ENCODE measurements at regions of chr2 and their contacts with region 1.

Region 1: GRCh38 chr2:200306196-200306930 is at the start of gene SPATS2L:
- DNase-seq: peak; percentile 89
- H3K4me3 ChIP-seq: peak within 1 kb of the TSS; percentile 92
- H3K27ac ChIP-seq: peak within 1 kb of the TSS; percentile 90
- H3K4me1 ChIP-seq: peaks cover 45% of the 10 kb centered on the region
- H3K27me3 ChIP-seq: no peaks in the 10 kb centered on the region
- total RNA-seq, gene SPATS2L: 103 and 128 TPM in 2 replicates

Region 2: GRCh38 chr2:198756166-198756565 is 1550.2 kb before region 1 on chr2:
- in situ Hi-C with region 1: no loop called
- DNase-seq: peak; percentile 78
- H3K4me3 ChIP-seq: no peak overlapping the region
- H3K27ac ChIP-seq: no peak overlapping the region
- H3K4me1 ChIP-seq: peaks cover 4% of the 10 kb centered on the region; the same call in 1 of the 2 replicates
- H3K27me3 ChIP-seq: no peaks in the 10 kb centered on the region

Region 3: DNA sequence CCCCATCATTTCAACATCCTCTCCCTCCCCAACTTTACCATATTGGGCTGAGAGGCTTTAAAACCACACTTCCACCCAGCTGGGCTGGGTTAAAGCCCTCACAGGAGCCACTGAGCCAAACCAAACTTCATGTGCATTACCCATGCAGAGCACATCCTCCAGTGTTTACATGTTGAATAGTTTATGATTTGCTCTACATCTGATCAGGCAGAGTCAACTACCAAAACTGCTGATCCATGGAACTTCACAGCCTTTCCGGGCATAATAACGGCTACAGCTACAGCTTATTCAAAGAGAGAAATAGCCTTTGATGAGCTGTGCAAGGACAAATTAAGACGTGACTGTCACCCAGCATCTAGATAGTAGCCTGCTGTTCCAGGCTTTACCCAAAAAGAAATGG is 312.0 kb before region 1 on chr2:
- in situ Hi-C with region 1: loop called (anchors 10 kb)
- DNase-seq: no peak
- H3K4me3 ChIP-seq: no peak overlapping the region
- H3K27ac ChIP-seq: no peak overlapping the region
- H3K4me1 ChIP-seq: no peaks in the 10 kb centered on the region
- H3K27me3 ChIP-seq: no peaks in the 10 kb centered on the region

Measured in GM23248 (cell line).